Panc1 (cell line): ENCODE measurements at regions of chr13 and their contacts with region 1.

Region 1: DNA sequence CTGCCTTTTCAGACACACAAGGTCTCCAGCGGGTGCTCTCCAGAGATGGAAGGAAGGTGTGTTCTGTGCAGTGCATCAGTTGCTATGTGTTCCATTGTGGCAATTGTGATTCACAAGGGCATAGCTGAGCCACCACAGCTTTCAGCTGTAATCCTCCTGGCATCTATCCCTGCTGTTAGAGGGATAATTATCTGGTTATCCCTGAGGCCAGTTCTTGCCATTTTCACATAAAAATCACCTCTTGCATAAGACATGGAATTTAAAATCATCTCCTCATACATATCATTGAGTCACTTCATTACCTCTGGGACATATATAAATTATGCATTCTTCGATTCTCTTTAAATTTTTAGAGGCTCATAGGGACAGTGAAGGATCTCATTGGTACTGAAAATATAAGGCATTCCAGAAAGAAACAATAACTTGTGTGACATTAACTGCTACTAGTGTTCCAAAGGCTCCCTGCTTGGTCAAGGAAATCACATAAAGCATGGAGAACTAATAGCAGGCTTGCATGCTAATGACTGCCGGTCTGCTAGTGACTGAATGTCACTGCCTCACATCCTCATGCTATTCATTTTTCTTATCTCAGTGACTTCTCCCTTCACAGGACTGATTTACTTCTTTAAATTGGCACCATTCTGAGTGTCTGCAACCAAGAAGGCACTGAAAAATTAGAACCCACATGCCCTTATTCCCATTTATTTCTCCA is 214.0 kb downstream of the ENOX1 start:
- DNase-seq: no peak
- ATAC-seq: no peak
- H3K4me3 ChIP-seq: no peak overlapping the region
- H3K27ac ChIP-seq: no peak overlapping the region
- H3K4me1 ChIP-seq: no peaks in the 10 kb centered on the region
- H3K27me3 ChIP-seq: no peaks in the 10 kb centered on the region
- CTCF ChIP-seq: no peak

Region 2: GRCh38 chr13:43422116-43422515 is 150.7 kb before region 1 on chr13:
- CTCF ChIA-PET with region 1: no interaction called
- POLR2A ChIA-PET with region 1: no interaction called
- in situ Hi-C with region 1: no loop called
- intact Hi-C with region 1: no loop called
- DNase-seq: no peak
- ATAC-seq: no peak
- H3K4me3 ChIP-seq: no peak overlapping the region
- H3K27ac ChIP-seq: no peak overlapping the region
- H3K4me1 ChIP-seq: no peaks in the 10 kb centered on the region
- H3K27me3 ChIP-seq: no peaks in the 10 kb centered on the region
- CTCF ChIP-seq: no peak

Region 3: DNA sequence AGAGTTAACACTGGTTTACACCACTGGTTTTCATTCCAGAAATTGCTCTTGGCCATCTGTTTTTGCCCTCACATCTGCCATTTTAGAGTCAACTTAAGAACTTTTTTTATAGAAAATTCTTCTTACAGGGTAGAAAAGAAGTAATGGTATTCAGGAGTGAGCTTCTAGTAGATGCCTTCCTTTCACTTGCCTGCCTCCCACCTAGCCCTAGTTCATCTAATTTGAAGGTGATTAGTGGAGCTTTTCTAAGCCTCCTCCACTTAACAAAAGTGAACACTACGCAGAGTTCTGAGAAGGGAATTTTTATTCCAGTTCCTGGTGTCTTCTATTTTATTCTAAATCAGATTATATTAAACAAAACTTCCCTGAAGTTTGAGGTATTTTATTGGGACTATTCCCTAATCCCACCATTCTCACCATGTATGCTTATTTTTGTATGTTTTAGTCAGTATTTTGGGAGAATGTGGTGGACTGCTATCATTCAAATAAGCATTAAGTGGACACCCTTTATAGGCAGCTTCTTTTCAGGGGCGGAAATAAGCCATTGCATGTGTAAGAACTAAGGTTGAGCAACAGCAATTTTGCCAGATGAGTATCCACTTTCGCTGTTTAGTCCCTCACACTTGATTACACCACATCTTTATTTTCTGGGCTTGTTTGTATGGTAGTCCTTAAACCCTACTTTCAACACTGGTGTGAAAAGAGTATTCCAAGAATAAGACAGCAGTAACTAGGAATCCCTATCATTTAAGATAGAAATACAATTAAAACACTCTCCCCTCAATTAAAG is 57.1 kb after region 1 on chr13:
- CTCF ChIA-PET with region 1: no interaction called
- POLR2A ChIA-PET with region 1: no interaction called
- in situ Hi-C with region 1: no loop called
- intact Hi-C with region 1: loop called (anchors 2 kb)
- DNase-seq: no peak
- ATAC-seq: no peak
- H3K4me3 ChIP-seq: no peak overlapping the region
- H3K27ac ChIP-seq: no peak overlapping the region
- H3K4me1 ChIP-seq: no peaks in the 10 kb centered on the region
- H3K27me3 ChIP-seq: no peaks in the 10 kb centered on the region
- CTCF ChIP-seq: no peak